ENCODE measurements at regions of chr16 and their contacts with region 1.

Region 1: DNA sequence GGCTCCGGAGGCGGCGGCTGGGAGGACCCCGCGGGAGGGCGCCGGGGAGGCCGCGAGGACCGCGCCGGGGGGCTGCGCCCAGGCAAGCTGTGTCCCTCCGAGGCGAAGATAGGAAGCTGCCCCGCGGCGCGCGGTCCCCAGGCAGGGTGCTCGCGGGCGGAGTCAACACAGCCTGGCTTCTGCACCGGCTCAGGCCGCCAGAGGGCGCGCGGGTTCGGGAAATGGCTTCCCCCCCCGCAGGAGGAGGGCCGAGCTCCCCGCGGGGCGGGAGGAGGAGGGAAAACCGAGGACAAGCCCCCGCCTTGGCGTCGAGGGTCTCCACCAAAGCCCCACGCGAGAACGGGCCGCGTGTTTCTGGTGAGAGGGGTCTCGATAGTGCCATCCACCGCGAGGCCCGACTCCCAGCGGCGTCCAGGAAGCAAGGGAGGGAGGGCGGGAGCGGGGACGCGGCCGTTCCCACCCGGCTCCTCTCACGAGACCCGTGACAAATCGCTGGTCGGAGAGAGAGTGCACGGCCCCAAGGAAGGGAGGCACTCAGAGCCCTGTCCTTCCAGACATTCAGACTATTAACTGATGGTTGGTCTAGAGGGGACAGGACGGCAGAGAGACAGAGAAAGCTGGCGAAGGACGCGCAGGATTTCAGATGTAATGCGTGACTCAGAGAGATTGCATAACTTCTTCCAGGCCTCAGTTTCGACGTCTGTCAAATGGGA is 64.4 kb upstream of the DNAJA2 start:
- DNase-seq: peak; percentile 89 to 94
- ATAC-seq: peak; percentile 96 to 99 (median 98)
- H3K4me3 ChIP-seq: peak overlapping the region; percentile 41 to 77 (median 66)
- H3K27ac ChIP-seq: peak overlapping the region in 7 of 10 donors; percentile 8 to 81 (median 57)
- H3K4me1 ChIP-seq: peaks cover 0 to 13% (median 4%) of the 10 kb centered on the region in 9 donors
- H3K27me3 ChIP-seq: peaks cover 0 to 7% (median 0%) of the 10 kb centered on the region in 7 donors
- CTCF ChIP-seq: peak; percentile 77 to 98 (median 93)

Region 2: DNA sequence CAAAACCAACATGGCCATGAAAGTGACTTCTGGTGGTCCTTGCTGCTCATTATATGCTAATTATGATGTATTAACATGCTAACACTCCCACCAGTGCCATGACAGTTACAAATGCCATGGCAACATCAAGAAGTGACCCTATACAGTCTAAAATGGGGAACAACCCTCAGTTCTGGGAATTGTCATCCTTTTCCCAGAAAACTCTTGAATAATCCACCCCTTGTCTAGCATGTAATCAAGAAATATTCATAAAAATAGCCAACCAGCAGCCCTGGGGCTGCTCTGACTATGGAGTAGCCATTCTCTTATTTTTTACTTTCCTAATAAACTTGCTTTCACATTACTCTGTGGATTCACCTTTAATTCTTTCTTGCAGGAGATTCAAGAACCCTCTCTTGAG is 100.4 kb before region 1 on chr16:
- intact Hi-C with region 1: no loop called
- DNase-seq: no peak
- ATAC-seq: no peak
- H3K4me3 ChIP-seq: no peak overlapping the region
- H3K27ac ChIP-seq: no peak overlapping the region
- H3K4me1 ChIP-seq: no peaks in the 10 kb centered on the region
- H3K27me3 ChIP-seq: no peaks in the 10 kb centered on the region
- CTCF ChIP-seq: no peak

Region 3: DNA sequence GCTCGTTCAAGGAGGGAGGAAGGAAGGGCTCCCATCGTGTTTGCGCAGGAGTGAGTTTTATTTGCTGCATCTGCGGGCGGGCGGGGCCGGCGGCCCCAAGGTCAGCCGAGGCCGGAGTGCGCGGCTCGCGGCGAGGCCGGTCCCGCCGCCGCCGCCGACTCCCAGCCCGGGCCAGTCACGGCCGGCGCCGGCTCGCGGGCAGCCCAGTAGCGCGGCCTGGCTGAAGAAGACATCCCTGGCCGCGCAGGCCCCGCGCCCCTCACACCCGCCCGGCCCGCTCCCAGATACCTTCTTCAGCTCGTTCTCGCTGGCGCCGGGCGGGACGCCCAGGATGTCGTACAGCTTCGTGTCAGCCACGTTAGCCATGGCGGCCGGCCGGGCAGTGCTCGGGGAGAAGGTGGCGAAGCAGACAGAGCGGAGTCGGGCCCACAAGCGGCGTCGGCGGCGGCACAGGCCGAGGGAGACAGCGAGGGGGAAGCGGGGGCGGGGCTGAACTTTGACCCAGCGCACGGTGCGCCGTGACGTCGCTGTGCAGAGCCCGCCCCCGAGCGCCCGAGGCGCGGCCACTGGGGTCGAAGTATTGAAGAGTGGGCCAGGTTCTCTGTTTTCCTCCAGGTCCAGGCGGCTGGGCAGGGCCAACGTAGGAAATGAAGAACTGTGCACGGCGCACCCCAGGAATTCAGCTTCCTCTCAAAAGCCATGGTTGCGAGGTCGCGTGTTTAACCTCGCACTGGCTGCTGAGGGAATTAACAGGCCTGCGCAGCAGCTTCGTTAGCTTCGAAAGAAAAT is 64.5 kb before region 1 on chr16 and contains the start of gene DNAJA2:
- intact Hi-C with region 1: loop called in 1 of 10 experiments (anchors 10 kb)
- DNase-seq: peak; percentile 92 to 95
- ATAC-seq: peak; percentile 98 to 100 (median 99)
- H3K4me3 ChIP-seq: peak within 1 kb of the TSS; percentile 76 to 97 (median 88)
- H3K27ac ChIP-seq: peak within 1 kb of the TSS; percentile 87 to 98 (median 97)
- H3K4me1 ChIP-seq: peaks cover 2 to 51% (median 49%) of the 10 kb centered on the region in 9 donors
- H3K27me3 ChIP-seq: no peaks in the 10 kb centered on the region
- CTCF ChIP-seq: no peak
- total RNA-seq, gene DNAJA2: 74.8 to 107 (median 92.3) TPM

Region 4: DNA sequence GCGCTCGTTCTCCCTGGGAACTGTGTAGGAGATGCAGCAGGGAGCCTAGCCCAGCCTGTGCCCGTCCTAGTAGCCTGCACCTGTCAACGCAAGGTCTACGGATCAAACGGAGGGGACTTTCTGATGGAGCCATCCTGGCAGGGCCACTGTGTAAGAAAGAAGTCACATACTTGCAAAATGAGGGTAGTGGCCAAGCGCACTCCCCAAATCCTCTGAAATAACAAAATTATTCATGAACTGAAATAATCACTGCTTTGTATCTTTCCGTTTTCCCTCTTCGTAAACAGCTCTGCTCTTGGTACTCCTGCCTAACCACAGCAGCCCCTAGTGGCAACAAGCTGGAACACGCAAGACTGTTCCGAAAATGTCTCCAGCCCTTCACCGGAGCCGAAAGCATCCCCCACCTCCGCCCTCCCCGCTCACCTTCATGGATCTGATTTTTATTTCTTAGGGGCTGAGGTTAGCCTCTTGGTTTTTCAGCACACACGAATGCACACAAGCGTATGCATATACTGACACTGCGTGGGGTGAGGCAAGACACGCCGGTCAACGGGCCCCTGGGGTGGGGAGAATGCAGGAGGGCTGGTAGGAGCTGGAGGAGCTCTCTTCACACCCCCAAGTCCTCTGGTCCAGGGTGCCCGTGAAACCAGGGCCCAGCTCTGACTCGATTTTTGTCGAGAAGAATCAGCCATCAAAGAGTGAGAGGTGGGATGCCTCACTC is 1017.1 kb after region 1 on chr16:
- intact Hi-C with region 1: loop called in 1 of 10 experiments (anchors 5 kb)
- DNase-seq: peak; percentile 24 to 47
- ATAC-seq: peak; percentile 47 to 91 (median 76)
- H3K4me3 ChIP-seq: peak overlapping the region in 3 of 10 donors; percentile 16 to 28 (median 20)
- H3K27ac ChIP-seq: no peak overlapping the region
- H3K4me1 ChIP-seq: peaks cover 0 to 24% (median 5%) of the 10 kb centered on the region in 9 donors
- H3K27me3 ChIP-seq: peaks cover 0 to 9% (median 0%) of the 10 kb centered on the region in 7 donors
- CTCF ChIP-seq: peak; percentile 54 to 85 (median 76)

Region 5: GRCh38 chr16:48156790-48157209 is 1118.9 kb after region 1 on chr16:
- intact Hi-C with region 1: loop called in 5 of 10 experiments (anchors 5 to 10 kb)
- DNase-seq: peak; percentile 87 to 89
- ATAC-seq: peak; percentile 83 to 95 (median 92)
- H3K4me3 ChIP-seq: peak overlapping the region in 5 of 10 donors; percentile 5 to 31 (median 21)
- H3K27ac ChIP-seq: peak overlapping the region in 7 of 10 donors; percentile 54 to 70 (median 62)
- H3K4me1 ChIP-seq: peaks cover 4 to 25% (median 10%) of the 10 kb centered on the region in 9 donors
- H3K27me3 ChIP-seq: peaks cover 0 to 8% (median 0%) of the 10 kb centered on the region in 7 donors
- CTCF ChIP-seq: peak; percentile 94 to 99 (median 98)

Region 6: DNA sequence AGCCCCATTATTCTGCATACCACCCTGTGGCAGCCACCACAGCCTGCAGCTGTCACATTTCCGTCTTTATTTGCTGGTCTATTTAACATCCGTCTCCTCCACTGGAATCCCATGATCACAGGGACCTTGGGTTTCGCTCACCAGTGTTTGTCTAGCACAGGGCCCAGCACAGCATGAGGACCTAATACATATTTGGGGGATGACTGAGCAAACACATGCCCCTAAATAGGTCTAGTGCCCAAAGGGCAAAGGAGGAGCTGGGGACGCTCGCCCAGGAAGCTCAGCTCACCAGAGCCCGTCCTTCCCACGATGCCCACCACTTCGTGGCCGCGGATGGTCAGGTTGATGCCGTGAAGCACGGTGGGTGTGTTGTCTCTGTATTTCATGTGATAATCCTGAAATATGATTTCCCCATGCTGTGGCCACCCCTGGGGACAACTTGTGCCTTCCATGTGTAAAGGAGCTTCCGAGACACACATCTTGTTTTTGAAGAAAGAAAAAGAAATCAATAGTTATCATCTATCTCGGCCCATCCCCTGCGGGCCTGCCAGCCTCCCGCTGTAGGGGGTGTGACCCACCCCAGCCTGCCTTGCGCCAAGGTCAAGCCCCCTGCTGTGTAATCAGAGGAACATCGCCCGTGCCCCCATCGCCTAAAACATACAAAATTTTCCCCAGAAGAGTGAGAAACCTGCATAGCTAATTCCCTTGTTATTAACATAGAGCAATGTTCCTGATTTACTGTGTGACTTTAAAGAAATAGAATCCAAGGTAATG is 1138.9 kb after region 1 on chr16:
- intact Hi-C with region 1: loop called in 1 of 10 experiments (anchors 10 kb)
- DNase-seq: no peak
- ATAC-seq: no peak
- H3K4me3 ChIP-seq: no peak overlapping the region
- H3K27ac ChIP-seq: no peak overlapping the region
- H3K4me1 ChIP-seq: no peaks in the 10 kb centered on the region
- H3K27me3 ChIP-seq: peaks cover 0 to 18% (median 0%) of the 10 kb centered on the region in 7 donors
- CTCF ChIP-seq: no peak

Measured in heart right ventricle (tissue), 16 donors.